GM12878 (cell line): ENCODE measurements at regions of chr1 and their contacts with region 1.

Region 1: GRCh38 chr1:61851849-61852669 is 109.8 kb downstream of the PATJ start:
- DNase-seq: no peak
- ATAC-seq: peak; percentile 84
- H3K4me3 ChIP-seq: no peak overlapping the region
- H3K27ac ChIP-seq: no peak overlapping the region
- H3K4me1 ChIP-seq: no peaks in the 10 kb centered on the region
- H3K27me3 ChIP-seq: no peaks in the 10 kb centered on the region
- CTCF ChIP-seq: peak; percentile 60 to 78 (median 67)
- EP300 ChIP-seq: no peak
- POLR2A ChIP-seq: no peak
- RAD21 ChIP-seq: peak; percentile 90

Region 2: DNA sequence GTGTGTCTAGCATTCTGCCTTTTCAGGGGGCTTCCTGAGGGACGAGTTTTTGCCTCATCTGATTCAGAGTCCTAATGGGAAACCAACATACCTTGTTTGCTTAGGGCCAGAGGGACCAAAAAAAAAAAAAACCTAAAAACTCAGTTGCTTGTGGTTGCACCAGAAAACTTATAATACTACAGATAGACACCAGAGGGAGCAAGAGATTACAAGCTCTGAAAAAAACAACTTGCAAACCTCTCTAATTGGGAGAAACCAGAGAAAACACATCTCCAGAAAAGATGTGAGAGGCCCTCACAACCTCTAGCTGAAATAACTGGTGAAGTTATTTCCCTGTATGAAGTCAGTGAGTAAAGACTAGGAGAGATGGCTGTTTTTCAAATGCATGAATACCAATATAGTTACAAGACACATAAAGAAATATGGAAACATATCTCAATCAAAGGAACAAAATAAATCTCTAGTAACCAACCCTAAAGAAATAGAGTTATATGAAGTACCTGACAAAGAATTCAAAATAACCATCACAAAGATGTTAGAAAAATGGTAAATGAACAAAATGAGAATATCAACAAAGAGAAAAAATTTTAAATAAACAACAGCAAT is 1003.4 kb before region 1 on chr1:
- CTCF ChIA-PET with region 1: interaction called, 4 read pairs
- POLR2A ChIA-PET with region 1: no interaction called
- RAD21 ChIA-PET with region 1: no interaction called
- SMC1A ChIA-PET with region 1: no interaction called
- in situ Hi-C with region 1: no loop called
- intact Hi-C with region 1: loop called (anchors 1 kb)
- DNase-seq: no peak
- ATAC-seq: peak; percentile 15; the same call in 1 of the 3 replicates
- H3K4me3 ChIP-seq: no peak overlapping the region
- H3K27ac ChIP-seq: no peak overlapping the region
- H3K4me1 ChIP-seq: no peaks in the 10 kb centered on the region
- H3K27me3 ChIP-seq: no peaks in the 10 kb centered on the region
- CTCF ChIP-seq: peak; percentile 23 to 42 (median 37); a peak in 5 of 6 replicates
- EP300 ChIP-seq: no peak
- POLR2A ChIP-seq: no peak
- RAD21 ChIP-seq: peak; percentile 53

Region 3: DNA sequence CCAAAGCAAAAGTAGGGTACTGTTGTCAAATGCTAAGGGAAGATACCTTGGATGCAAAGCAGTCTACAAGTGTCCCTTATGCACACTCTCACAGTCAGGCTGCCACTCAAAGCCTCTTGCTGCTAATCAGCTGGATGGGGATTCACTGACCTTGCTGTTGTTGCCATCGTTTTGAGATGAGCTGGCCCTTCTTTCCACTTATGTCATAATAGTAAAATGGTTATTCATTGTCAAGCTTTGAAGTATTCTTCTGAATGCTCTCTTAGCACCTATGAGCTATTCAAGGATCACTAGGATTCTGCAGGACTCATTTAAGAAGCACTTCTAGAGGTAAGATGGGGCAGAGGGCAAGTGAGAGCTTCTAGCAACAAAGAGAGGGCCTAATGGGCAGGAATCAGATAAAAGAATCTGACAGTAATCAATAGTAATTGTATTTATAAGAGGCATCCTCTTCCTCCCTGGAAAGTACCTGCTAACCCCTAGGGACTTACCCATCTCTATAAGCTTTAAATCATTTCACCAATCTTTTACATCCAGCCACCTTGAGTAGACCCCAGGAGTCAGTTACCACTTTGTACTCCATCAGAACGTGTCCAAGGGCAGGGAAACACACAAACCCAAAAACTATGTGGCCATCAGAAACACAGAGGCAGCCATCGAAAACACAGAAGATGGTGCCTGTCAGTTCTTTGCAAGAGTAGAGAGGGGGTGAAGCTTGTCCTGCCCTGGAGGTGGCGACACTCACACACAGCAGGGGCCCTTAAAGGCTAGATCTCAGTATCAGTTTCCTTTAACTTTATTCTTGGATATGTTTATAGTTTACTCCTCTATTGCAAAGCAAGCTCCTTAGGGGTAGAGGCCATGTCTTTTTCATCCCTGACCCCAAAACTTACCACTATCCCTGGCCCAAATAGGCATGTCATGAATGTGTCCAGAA is 873.4 kb before region 1 on chr1:
- CTCF ChIA-PET with region 1: no interaction called
- POLR2A ChIA-PET with region 1: no interaction called
- RAD21 ChIA-PET with region 1: interaction called, 3 read pairs
- SMC1A ChIA-PET with region 1: no interaction called
- in situ Hi-C with region 1: no loop called
- intact Hi-C with region 1: loop called (anchors 5 kb)
- DNase-seq: peak; percentile 15
- ATAC-seq: peak; percentile 93
- H3K4me3 ChIP-seq: no peak overlapping the region
- H3K27ac ChIP-seq: no peak overlapping the region
- H3K4me1 ChIP-seq: no peaks in the 10 kb centered on the region
- H3K27me3 ChIP-seq: no peaks in the 10 kb centered on the region
- CTCF ChIP-seq: peak; percentile 58 to 60 (median 60)
- EP300 ChIP-seq: no peak
- POLR2A ChIP-seq: no peak
- RAD21 ChIP-seq: peak; percentile 62

Region 4: DNA sequence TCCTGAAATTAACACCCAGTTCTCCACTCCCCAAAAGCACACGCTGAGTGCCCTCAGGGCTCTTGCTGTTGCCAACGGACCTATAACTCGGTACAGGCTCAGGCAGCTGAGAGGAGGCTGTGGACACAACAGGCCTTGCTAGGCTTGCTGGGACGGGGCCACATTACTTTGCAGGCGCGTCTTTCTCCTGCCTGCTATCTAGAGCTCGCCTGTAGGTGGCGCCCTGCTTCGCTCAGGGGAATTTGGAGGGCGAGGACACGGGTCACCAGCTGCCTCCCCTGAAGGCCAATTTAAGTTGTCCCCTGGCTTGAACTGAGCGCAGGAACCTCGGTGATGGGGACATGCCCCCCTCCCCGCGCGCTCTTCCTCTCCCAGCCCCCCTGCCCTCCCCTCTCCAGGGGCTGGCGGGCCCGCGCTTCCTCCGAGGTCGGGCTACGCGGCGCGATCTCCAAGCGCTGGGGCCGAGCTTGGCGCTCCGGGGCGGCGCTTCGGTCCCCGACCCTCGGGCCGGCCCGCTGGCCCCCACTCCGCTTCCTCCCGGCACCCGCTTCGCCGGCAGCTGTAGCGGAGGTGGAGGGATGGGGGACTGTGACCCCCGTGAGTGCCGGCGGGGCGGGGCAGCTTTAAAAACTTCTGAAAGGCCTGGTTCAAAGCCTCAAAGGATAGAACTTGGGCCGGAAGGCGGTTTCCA is 802.1 kb before region 1 on chr1:
- CTCF ChIA-PET with region 1: interaction called, 3 read pairs
- POLR2A ChIA-PET with region 1: no interaction called
- RAD21 ChIA-PET with region 1: interaction called, 3 read pairs
- SMC1A ChIA-PET with region 1: no interaction called
- in situ Hi-C with region 1: no loop called
- intact Hi-C with region 1: loop called (anchors 10 kb)
- DNase-seq: no peak
- ATAC-seq: peak; percentile 89
- H3K4me3 ChIP-seq: peak overlapping the region; percentile 32; the same call in 1 of the 2 replicates
- H3K27ac ChIP-seq: no peak overlapping the region
- H3K4me1 ChIP-seq: no peaks in the 10 kb centered on the region
- H3K27me3 ChIP-seq: peaks cover 5 to 22% of the 10 kb centered on the region in 2 experiments
- CTCF ChIP-seq: peak; percentile 75 to 80 (median 79)
- EP300 ChIP-seq: no peak
- POLR2A ChIP-seq: no peak
- RAD21 ChIP-seq: peak; percentile 62

Region 5: GRCh38 chr1:61552630-61553305 is 299.3 kb before region 1 on chr1:
- CTCF ChIA-PET with region 1: interaction called, 36 read pairs
- POLR2A ChIA-PET with region 1: no interaction called
- RAD21 ChIA-PET with region 1: no interaction called
- SMC1A ChIA-PET with region 1: interaction called, 6 read pairs
- in situ Hi-C with region 1: no loop called
- intact Hi-C with region 1: loop called (anchors 1 kb)
- DNase-seq: no peak
- ATAC-seq: no peak
- H3K4me3 ChIP-seq: no peak overlapping the region
- H3K27ac ChIP-seq: no peak overlapping the region
- H3K4me1 ChIP-seq: no peaks in the 10 kb centered on the region
- H3K27me3 ChIP-seq: no peaks in the 10 kb centered on the region
- CTCF ChIP-seq: no peak
- EP300 ChIP-seq: no peak
- POLR2A ChIP-seq: no peak
- RAD21 ChIP-seq: no peak

Region 6: DNA sequence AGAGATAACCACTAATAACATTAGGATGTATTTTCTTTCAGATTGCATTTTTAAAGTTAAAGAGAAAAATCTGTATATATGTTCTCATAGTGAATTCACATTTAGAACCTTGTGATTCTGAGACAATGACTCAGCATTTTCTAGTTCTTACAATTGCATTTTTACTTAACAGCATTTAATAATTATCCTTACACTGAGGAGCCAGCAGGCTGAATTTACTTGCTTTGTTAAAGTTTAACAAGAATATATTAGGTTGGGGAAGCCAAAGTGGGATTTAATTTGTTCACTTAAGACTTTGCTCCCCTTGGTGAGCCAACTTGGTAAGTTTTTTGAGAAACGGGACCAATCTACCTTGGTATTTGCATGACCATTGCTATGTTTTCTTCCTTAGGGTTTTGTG is 105.2 kb before region 1 on chr1:
- CTCF ChIA-PET with region 1: no interaction called
- POLR2A ChIA-PET with region 1: no interaction called
- RAD21 ChIA-PET with region 1: no interaction called
- SMC1A ChIA-PET with region 1: no interaction called
- in situ Hi-C with region 1: no loop called
- intact Hi-C with region 1: no loop called
- DNase-seq: no peak
- ATAC-seq: no peak
- H3K4me3 ChIP-seq: no peak overlapping the region
- H3K27ac ChIP-seq: no peak overlapping the region
- H3K4me1 ChIP-seq: peaks cover 3% of the 10 kb centered on the region; the same call in 1 of the 2 replicates
- H3K27me3 ChIP-seq: no peaks in the 10 kb centered on the region
- CTCF ChIP-seq: no peak
- EP300 ChIP-seq: no peak
- POLR2A ChIP-seq: no peak
- RAD21 ChIP-seq: no peak

Region 7: DNA sequence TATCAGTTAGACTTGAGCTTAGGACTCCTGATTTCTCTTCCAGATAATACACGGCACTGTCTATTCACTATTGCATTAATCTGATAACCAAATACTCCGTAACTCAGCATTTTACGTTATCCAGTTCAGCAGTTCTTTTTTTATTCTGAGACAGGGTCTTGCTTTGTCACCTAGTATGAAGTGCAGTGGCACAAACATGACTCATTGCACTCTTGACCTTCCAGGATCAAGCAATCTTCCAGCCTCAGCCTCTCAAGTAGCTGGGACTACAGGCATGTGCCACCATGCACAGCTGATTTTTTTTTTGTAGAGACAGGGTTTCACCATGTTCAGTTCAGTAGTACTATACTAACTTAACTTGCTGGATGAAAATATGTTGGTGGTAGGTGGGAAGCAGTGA is 46.6 kb after region 1 on chr1:
- CTCF ChIA-PET with region 1: no interaction called
- POLR2A ChIA-PET with region 1: no interaction called
- RAD21 ChIA-PET with region 1: no interaction called
- SMC1A ChIA-PET with region 1: no interaction called
- in situ Hi-C with region 1: no loop called
- intact Hi-C with region 1: no loop called
- DNase-seq: no peak
- ATAC-seq: no peak
- H3K4me3 ChIP-seq: no peak overlapping the region
- H3K27ac ChIP-seq: no peak overlapping the region
- H3K4me1 ChIP-seq: no peaks in the 10 kb centered on the region
- H3K27me3 ChIP-seq: no peaks in the 10 kb centered on the region
- CTCF ChIP-seq: no peak
- EP300 ChIP-seq: no peak
- POLR2A ChIP-seq: no peak
- RAD21 ChIP-seq: no peak

Region 8: DNA sequence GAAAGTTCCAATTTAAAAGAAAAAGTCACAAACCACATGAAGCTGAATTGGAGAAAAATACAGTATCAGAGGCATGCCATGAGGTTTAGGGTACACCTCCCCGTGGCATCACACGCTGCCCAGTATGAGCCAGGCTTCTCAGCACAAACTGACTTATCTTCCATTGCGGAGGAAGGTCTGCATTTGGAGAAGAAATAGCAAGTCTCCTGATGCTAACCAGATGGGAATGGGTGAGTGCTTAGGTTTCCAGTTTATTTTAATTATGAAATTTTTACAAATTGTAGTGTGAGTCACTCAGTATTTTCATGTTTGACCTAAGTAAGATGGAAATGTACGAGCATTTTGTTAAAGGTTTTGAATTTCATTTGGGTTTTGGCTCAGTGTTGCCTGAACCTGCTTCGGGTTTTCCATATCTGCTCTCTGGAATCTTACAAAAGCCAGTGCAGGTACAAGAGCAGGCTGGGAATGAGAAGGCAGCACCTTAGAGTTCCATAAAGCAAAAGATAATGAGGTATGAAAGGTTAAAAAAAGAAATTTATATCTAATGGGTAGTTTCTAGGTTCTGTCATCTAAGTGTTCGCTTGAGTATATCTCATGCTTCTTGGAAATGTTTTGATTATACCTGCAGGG is 104.1 kb after region 1 on chr1:
- CTCF ChIA-PET with region 1: no interaction called
- POLR2A ChIA-PET with region 1: no interaction called
- RAD21 ChIA-PET with region 1: no interaction called
- SMC1A ChIA-PET with region 1: no interaction called
- in situ Hi-C with region 1: no loop called
- intact Hi-C with region 1: no loop called
- DNase-seq: no peak
- ATAC-seq: no peak
- H3K4me3 ChIP-seq: no peak overlapping the region
- H3K27ac ChIP-seq: no peak overlapping the region
- H3K4me1 ChIP-seq: no peaks in the 10 kb centered on the region
- H3K27me3 ChIP-seq: no peaks in the 10 kb centered on the region
- CTCF ChIP-seq: no peak
- EP300 ChIP-seq: no peak
- POLR2A ChIP-seq: no peak
- RAD21 ChIP-seq: no peak

Region 9: DNA sequence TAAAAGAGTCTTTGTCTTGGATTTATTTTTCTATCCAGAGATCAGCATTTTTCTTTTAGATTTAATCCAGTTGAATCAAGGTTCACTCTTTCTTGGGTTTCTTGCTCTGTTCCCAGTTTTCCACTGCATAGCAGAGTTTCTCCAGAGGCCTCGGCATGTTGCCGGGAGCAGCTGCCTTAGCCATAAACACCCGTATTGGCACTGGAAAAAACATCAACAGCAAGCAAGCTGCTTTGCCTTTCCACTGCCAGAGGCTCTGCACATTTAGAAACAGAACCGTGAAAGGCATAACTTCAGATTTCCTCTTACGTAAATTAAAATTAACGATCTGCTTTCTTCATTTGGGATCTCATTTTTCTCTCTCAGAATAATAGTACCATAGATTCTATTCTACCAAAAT is 160.8 kb after region 1 on chr1:
- CTCF ChIA-PET with region 1: no interaction called
- POLR2A ChIA-PET with region 1: no interaction called
- RAD21 ChIA-PET with region 1: no interaction called
- SMC1A ChIA-PET with region 1: no interaction called
- in situ Hi-C with region 1: no loop called
- intact Hi-C with region 1: no loop called
- DNase-seq: no peak
- ATAC-seq: no peak
- H3K4me3 ChIP-seq: no peak overlapping the region
- H3K27ac ChIP-seq: no peak overlapping the region
- H3K4me1 ChIP-seq: no peaks in the 10 kb centered on the region
- H3K27me3 ChIP-seq: no peaks in the 10 kb centered on the region
- CTCF ChIP-seq: no peak
- EP300 ChIP-seq: no peak
- POLR2A ChIP-seq: no peak
- RAD21 ChIP-seq: no peak

Region 10: DNA sequence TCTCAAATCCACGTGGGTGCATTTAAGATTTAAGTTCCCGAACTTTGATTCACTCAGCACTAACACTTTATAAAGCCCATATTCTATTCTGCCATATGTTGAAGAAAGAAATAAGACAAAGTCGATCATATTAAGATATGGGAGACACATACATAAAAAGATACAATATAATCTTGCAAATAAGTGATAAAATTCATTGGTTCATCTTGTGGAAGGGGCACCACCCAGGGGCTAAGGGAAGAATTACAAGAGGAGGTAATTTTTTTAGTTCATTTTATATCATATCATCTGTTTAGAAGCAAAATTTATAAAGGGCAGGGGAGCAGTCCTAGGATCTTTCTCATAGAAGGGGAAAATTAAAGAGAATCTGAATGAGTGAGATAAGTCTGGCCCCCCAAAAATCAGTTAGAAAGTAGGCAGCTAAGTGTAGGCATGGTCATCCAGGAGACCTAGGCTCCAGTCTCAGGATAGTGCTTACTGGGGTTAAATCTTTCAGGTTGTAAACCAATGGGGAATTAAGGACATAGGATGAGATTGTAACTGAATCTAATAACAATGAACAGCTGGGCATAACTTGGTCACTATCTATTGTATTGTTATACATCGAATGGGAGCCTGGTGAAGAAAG is 218.4 kb after region 1 on chr1:
- CTCF ChIA-PET with region 1: no interaction called
- POLR2A ChIA-PET with region 1: no interaction called
- RAD21 ChIA-PET with region 1: no interaction called
- SMC1A ChIA-PET with region 1: no interaction called
- in situ Hi-C with region 1: no loop called
- intact Hi-C with region 1: loop called (anchors 10 kb)
- DNase-seq: no peak
- ATAC-seq: peak; percentile 34; the same call in 1 of the 3 replicates
- H3K4me3 ChIP-seq: no peak overlapping the region
- H3K27ac ChIP-seq: no peak overlapping the region
- H3K4me1 ChIP-seq: no peaks in the 10 kb centered on the region
- H3K27me3 ChIP-seq: no peaks in the 10 kb centered on the region
- CTCF ChIP-seq: peak in 2 of 3 experiments; percentile 34 to 49; a peak in 4 of 6 replicates
- EP300 ChIP-seq: no peak
- POLR2A ChIP-seq: no peak
- RAD21 ChIP-seq: peak; percentile 56